KBM-7 (cell line): ENCODE measurements at regions of chr18 and their contacts with region 1.

Region 1: GRCh38 chr18:23356915-23357601 is 96.0 kb upstream of the RIOK3 start:
- DNase-seq: no peak

Region 2: GRCh38 chr18:23131693-23132319 is 225.3 kb before region 1 on chr18:
- in situ Hi-C with region 1: loop called (anchors 25 kb)
- DNase-seq: peak; percentile 76